Esophagus squamous epithelium (tissue), 5 donors: ENCODE measurements at regions of chr3 and their contacts with region 1.

Region 1: GRCh38 chr3:197189633-197190032 is 108.8 kb downstream of the DLG1 start:
- DNase-seq: no peak
- H3K4me3 ChIP-seq: no peak overlapping the region
- H3K27ac ChIP-seq: no peak overlapping the region
- H3K4me1 ChIP-seq: no peaks in the 10 kb centered on the region
- H3K27me3 ChIP-seq: no peaks in the 10 kb centered on the region
- CTCF ChIP-seq: no peak
- POLR2A ChIP-seq: no peak

Region 2: DNA sequence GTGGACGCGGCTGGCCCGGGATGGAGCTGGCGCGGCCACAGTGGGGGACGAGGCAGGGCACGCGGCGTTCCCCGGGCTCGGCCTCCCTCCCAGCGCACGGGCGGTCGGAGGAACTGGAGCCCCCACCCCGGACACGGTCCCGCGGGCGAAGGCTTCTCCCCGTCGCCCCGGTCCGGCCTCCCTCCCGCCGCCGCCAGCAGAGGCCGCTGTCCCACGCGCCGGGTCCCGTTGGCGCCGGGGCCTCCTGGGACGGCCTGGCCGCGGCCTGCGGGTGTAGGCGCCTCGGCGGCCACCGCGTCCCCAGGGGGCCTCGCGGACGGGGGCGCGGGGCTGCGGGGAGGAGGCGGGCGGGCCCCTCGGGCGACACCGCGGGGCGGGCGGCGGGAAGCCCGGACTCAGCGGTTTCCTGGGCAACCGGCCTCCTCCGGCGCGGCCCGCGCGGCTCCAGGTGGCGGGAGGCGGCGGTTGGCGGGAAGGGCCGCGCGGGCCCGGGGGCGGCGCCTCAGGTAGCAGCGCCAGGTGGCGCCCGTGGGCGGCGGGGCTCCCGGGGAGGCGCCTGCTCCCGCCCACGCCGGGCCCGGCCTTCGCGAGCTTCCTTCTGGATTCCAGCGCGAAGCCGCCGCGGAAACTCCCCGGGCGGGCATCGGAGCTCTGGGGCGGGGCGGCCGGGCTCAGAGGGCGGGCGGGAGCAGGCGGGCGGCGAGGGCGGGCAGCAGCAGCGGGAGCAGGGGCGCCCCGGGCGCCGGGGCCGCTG is 186.8 kb before region 1 on chr3:
- intact Hi-C with region 1: loop called (anchors 10 kb)
- DNase-seq: no peak
- H3K4me3 ChIP-seq: peak overlapping the region; percentile 57 to 80 (median 68)
- H3K27ac ChIP-seq: peak overlapping the region; percentile 82 to 93 (median 92)
- H3K4me1 ChIP-seq: peaks cover 0 to 28% (median 9%) of the 10 kb centered on the region in 3 donors
- H3K27me3 ChIP-seq: no peaks in the 10 kb centered on the region
- CTCF ChIP-seq: peak; percentile 64 to 88 (median 76)
- POLR2A ChIP-seq: no peak

Region 3: GRCh38 chr3:197103766-197104165 is 85.9 kb before region 1 on chr3:
- intact Hi-C with region 1: no loop called
- DNase-seq: no peak
- H3K4me3 ChIP-seq: no peak overlapping the region
- H3K27ac ChIP-seq: no peak overlapping the region
- H3K4me1 ChIP-seq: no peaks in the 10 kb centered on the region
- H3K27me3 ChIP-seq: no peaks in the 10 kb centered on the region
- CTCF ChIP-seq: no peak
- POLR2A ChIP-seq: no peak